ENCODE measurements at regions of chr3 and their contacts with region 1.

Region 1: DNA sequence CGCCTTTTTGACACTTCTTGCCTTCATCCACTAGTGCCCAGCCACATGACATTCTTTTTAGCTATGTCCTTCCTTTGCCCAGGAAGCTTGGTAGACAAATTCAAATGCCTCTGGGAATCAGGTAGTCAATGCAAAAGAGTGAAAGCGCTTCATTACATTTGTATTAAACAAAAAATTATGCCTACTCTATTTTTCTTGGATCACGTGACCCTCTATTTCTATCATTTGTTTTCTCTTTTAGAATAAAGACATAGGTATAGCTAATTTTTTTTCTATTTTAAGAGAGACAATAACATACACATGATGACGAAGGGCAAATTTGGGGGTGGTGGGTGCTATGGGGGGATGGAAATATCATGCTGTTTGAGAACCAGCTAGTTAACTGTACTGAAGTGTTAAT is 384.8 kb downstream of the C3orf38 start:
- DNase-seq: no peak
- ATAC-seq: no peak
- H3K4me3 ChIP-seq: no peak overlapping the region
- H3K27ac ChIP-seq: no peak overlapping the region
- H3K4me1 ChIP-seq: no peaks in the 10 kb centered on the region
- H3K27me3 ChIP-seq: no peaks in the 10 kb centered on the region
- CTCF ChIP-seq: no peak

Region 2: DNA sequence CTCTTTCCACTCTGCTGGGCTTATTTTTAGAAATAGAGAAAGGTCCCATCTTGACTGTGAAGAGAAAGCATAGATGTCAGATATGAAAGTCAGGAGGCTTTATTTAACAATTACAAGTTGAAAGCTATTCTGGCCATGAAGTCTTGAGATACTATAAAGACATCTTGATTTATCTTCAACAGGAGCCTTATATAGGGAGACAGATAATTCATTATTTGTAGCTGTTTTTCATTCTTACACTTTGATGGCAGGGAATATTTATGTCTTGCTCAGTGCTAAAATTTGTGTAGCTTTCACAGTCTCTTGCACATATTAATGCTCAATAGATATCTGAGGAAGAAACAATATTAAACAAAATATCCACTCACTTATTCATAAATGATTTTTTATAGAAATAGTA is 136.0 kb before region 1 on chr3:
- intact Hi-C with region 1: loop called in 1 of 2 experiments (anchors 5 kb)
- DNase-seq: no peak
- ATAC-seq: no peak
- H3K4me3 ChIP-seq: no peak overlapping the region
- H3K27ac ChIP-seq: no peak overlapping the region
- H3K4me1 ChIP-seq: no peaks in the 10 kb centered on the region
- H3K27me3 ChIP-seq: no peaks in the 10 kb centered on the region
- CTCF ChIP-seq: no peak

Measured in psoas muscle (tissue), 8 donors.